OCI-LY7 (cell line): ENCODE measurements at regions of chr1 and their contacts with region 1.

Region 1: DNA sequence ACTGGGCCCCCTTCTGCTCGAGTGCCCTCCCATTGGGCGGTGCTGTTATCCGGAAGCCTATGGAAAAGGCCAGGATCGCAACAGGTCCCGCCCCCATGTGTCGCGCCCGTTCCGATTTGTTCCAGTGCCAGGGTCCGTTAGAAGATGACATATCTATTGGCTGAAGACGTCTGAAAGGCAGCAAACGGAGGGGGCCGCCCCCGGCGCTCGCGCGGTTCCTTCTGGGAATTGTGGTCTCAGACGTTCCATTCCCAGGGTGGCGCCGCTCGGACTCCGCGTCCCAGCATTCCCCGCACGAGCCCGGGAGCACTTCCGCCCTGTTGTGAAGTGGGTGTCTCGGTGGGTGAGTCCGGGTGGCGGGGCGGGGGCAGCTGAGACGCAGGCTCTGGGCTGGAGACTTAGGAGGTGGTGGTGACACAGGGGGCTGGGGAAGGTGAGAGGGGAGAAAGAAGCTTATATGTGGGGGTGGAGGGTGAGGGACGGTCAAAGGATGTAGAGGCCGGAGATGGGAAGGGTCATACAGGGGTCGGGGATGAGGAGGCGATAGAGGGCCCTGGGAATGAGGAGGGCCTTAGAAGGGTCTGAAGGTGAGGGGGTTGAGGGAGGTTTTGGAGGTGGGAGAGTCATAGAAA is at the start of gene ZSCAN20:
- DNase-seq: peak; percentile 90
- H3K4me3 ChIP-seq: peak within 1 kb of the TSS; percentile 74
- H3K27ac ChIP-seq: no peak within 1 kb of the TSS
- H3K4me1 ChIP-seq: peaks cover 18% of the 10 kb centered on the region
- CTCF ChIP-seq: no peak
- total RNA-seq, gene ZSCAN20: 3.0 and 4.0 TPM in 2 replicates

Region 2: DNA sequence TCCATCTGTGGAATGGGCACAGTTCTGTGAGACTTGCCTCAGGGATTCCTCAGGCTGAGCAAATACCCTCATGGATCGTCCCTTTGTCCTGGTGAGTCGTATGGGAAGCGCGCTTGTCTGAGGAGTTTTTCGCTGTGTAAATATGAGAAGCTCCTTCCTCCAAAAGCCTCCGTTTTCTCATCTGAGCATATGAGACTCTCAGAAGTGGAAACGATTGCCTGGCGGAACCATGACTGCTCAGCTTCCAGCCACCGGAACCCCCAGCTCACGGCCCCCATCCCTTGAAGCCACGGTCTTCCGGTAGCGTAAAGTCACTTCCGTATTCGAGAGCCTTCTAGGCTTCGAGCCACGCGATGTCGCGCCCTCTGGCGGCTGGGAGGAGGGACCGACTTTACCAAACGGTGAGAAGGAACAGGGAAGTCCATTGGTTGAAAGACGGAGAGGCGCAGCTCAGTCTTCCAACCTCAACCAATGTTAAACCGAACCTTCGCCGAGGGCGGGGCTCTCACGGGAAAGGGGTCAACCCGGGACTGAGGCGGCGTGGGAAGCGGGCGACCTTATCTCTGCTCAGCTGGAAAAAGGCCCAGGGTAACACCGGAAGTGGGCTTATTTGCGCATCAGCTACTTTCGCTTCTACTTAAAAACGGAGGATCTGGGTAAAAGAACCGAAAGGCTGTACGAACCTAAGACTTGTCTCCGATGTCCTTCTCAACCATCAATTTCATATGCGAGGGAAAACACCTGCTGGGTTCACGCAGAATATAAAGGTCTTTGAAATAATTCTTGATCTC is 345.3 kb before region 1 on chr1:
- CTCF ChIA-PET with region 1: no interaction called
- POLR2A ChIA-PET with region 1: interaction called, 7 read pairs
- intact Hi-C with region 1: loop called (anchors 5 kb)
- DNase-seq: peak; percentile 98
- H3K4me3 ChIP-seq: peak overlapping the region; percentile 76
- H3K27ac ChIP-seq: peak overlapping the region; percentile 90
- H3K4me1 ChIP-seq: peaks cover 24% of the 10 kb centered on the region
- CTCF ChIP-seq: peak; percentile 96

Region 3: DNA sequence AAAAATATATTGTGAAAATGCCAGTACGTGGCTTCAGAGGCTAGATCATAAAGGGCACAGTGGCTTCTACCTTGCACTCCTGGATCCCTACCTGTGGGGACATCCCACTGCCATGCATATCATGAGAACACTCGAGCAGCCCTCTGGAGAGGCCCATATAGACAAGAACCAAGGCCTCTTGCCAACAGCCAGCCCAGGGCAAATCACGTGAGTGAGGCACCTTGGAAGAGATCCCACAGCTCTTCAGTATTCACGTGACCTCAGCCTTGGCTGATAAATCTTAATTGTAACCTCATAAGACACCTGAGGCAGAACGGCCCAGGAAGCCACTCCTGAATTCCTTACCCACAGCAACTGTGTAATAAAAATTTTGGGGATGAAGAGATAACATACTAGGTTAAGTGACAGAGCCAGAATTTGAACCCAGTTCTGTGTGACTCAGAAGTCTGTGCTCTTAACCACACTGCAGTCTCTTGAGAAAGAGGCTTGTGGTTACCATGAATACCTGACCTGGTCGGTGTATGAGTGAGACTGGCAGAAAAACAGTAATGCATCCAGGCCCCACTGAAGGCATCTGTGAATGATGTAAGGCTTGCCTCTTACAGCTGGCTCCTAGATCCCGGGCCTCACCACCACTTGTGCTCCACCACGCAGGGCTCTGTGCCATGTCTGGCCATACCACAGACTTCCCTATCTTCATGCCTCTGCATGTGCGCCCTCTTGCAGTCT is 144.7 kb before region 1 on chr1:
- CTCF ChIA-PET with region 1: no interaction called
- POLR2A ChIA-PET with region 1: no interaction called
- intact Hi-C with region 1: no loop called
- DNase-seq: no peak
- H3K4me3 ChIP-seq: no peak overlapping the region
- H3K27ac ChIP-seq: no peak overlapping the region
- H3K4me1 ChIP-seq: peaks cover 6% of the 10 kb centered on the region
- CTCF ChIP-seq: no peak